B cell (primary cell): ENCODE measurements at regions of chr5 and their contacts with region 1.

Region 1: DNA sequence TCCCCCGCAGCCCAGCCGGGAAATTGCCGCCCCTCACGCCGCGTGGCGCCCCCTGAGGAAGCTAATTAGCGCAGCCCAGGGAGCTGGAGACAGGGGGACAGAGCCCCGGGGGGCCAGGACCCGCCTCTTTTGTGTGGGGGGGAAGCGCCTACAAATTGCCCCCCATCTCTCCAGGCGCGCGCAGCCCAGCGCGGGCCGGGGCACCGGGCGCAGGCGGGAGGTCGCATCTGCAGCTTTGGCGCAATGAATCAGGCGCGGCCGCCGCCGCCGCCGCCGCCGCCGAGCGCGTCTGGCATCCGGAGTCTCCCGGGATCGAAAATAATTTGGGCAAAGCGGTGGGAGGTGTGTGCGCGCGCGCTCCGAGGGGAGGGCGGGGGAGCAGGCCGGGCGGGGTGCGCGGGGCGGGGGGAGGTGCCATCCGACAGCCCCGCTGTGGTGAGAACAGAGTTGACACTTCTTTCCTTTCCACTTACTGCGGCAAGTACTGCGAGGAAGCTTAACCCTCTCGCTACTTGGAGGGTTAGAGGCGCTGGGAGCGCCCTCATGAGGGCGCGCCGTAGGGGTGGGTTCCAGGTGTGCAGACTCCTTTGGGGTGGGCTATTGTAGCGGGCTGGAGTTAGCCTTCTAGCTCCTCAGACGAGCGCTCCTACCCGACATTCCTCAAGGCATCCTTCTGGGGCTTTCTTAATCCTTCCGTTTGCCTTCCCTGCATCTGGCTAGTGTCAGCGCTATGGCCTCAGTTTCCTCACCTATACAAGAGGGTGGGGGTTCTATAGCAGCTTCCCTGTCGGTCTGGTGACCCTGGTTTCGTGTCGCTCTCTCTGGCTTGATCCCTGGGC is 63.1 kb downstream of the CXXC5 start:
- DNase-seq: peak; percentile 77
- ATAC-seq: peak; percentile 51
- H3K4me3 ChIP-seq: peak overlapping the region; percentile 54 to 73 (median 60)
- H3K4me3 Mint-ChIP-seq: peak overlapping the region; percentile 90
- H3K27ac ChIP-seq: peak overlapping the region in 1 of 2 donors; percentile 75
- H3K27ac Mint-ChIP-seq: peak overlapping the region; percentile 81
- H3K4me1 ChIP-seq: peaks cover 27 to 37% of the 10 kb centered on the region in 2 donors
- H3K4me1 Mint-ChIP-seq: peaks cover 40% of the 10 kb centered on the region
- H3K27me3 ChIP-seq: peaks cover 0 to 5% (median 2%) of the 10 kb centered on the region in 4 experiments
- H3K27me3 Mint-ChIP-seq: no peaks in the 10 kb centered on the region
- CTCF ChIP-seq: no peak

Region 2: GRCh38 chr5:139651853-139652787 is 59.2 kb before region 1 on chr5:
- CTCF ChIA-PET with region 1: interaction called, 4 read pairs
- POLR2A ChIA-PET with region 1: interaction called, 9 read pairs
- intact Hi-C with region 1: loop called (anchors 1 kb)
- DNase-seq: peak; percentile 92
- ATAC-seq: peak; percentile 50
- H3K4me3 ChIP-seq: peak overlapping the region; percentile 50 to 98 (median 95)
- H3K4me3 Mint-ChIP-seq: peak overlapping the region; percentile 88
- H3K27ac ChIP-seq: peak overlapping the region; percentile 71 to 90
- H3K27ac Mint-ChIP-seq: peak overlapping the region; percentile 94
- H3K4me1 ChIP-seq: peaks cover 68 to 74% of the 10 kb centered on the region in 2 donors
- H3K4me1 Mint-ChIP-seq: peaks cover 71% of the 10 kb centered on the region
- H3K27me3 ChIP-seq: no peaks in the 10 kb centered on the region
- H3K27me3 Mint-ChIP-seq: no peaks in the 10 kb centered on the region
- CTCF ChIP-seq: no peak

Region 3: DNA sequence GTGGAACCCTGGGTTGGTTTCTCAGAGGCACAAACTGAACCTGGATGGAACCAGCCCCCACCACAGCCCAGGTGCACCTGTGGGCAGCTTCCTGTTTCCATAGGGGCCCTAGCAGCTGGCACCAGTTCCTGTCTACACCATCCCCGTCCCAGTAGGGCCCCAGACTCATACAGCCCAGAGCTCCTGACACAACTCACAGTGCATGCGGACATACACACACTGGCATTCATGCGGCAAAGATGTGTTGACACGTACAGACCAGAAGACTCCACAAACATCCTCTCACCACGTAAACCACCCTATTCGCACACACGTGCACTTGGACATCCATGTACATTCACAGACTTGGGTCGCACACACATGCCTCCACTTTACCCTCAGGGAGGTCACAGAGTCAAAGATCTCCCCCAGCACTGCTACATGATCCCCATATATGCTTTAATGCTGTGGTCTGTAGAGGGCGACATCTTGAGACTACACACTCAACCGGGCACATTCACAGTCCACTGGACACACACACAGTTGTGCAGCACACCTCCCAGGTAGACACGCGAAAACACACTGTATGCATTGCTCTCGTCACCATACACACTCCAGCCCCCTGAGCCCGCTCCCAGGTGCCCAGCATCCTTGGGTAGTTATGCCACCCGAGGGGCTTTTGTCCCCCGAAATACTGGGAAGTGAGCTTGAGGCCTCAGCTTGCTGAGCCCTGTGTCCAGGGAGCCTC is 40.8 kb before region 1 on chr5:
- CTCF ChIA-PET with region 1: interaction called, 4 read pairs
- POLR2A ChIA-PET with region 1: interaction called, 15 read pairs
- intact Hi-C with region 1: loop called (anchors 2 kb)
- DNase-seq: peak; percentile 89
- ATAC-seq: peak; percentile 69
- H3K4me3 ChIP-seq: peak overlapping the region in 4 of 5 experiments; percentile 40 to 71 (median 52)
- H3K4me3 Mint-ChIP-seq: peak overlapping the region; percentile 86
- H3K27ac ChIP-seq: peak overlapping the region; percentile 89 to 90
- H3K27ac Mint-ChIP-seq: peak overlapping the region; percentile 95
- H3K4me1 ChIP-seq: peaks cover 88 to 98% of the 10 kb centered on the region in 2 donors
- H3K4me1 Mint-ChIP-seq: peaks cover 88% of the 10 kb centered on the region
- H3K27me3 ChIP-seq: no peaks in the 10 kb centered on the region
- H3K27me3 Mint-ChIP-seq: no peaks in the 10 kb centered on the region
- CTCF ChIP-seq: peak; percentile 47

Region 4: GRCh38 chr5:139696894-139697658 is 14.2 kb before region 1 on chr5:
- CTCF ChIA-PET with region 1: interaction called, 21 read pairs
- POLR2A ChIA-PET with region 1: interaction called, 7 read pairs
- intact Hi-C with region 1: loop called (anchors 1 kb)
- DNase-seq: peak; percentile 55
- ATAC-seq: peak; percentile 34
- H3K4me3 ChIP-seq: peak overlapping the region in 4 of 5 experiments; percentile 33 to 56 (median 45)
- H3K4me3 Mint-ChIP-seq: peak overlapping the region; percentile 82
- H3K27ac ChIP-seq: no peak overlapping the region
- H3K27ac Mint-ChIP-seq: peak overlapping the region; percentile 72
- H3K4me1 ChIP-seq: peaks cover 41 to 48% of the 10 kb centered on the region in 2 donors
- H3K4me1 Mint-ChIP-seq: peaks cover 45% of the 10 kb centered on the region
- H3K27me3 ChIP-seq: peaks cover 0 to 35% (median 10%) of the 10 kb centered on the region in 4 experiments
- H3K27me3 Mint-ChIP-seq: peaks cover 17% of the 10 kb centered on the region
- CTCF ChIP-seq: no peak

Region 5: DNA sequence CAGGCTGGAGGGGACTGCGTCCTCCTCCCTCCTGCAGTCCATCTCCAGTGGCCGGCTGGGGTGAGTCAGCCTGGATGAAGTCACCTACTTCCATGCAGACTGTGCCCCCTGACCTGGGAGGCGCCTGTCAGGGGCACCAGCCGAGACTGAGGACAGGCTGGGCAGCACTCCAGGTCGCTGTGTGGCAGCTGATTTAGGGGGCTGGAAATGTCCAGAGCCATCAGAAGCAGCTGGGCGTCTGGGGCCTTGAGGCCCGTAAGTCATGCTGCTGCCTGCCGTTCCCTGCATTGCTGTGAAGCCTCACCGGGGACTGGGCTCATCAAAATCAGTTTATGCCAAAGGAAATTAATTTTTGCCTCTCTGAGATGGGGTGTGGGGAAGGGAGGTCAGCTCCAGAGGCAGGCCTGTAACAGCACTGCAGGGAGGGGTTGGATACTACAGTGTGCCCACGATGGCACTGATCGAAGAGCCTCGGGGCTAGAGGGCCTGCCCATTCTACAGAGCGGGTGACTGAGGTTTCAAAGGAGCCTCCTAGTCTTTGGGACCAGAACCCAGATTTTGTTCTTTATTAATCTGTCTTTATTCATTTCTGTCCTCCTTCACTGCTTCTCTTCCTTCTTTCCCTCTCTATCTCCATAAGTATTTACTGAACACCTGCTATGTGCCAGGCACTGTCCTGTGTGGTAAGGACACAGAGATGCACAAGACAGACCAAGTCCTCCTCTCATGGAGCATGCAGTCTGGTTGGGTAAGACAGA is 14.0 kb after region 1 on chr5:
- CTCF ChIA-PET with region 1: interaction called, 5 read pairs
- POLR2A ChIA-PET with region 1: interaction called, 7 read pairs
- intact Hi-C with region 1: loop called (anchors 2 kb)
- DNase-seq: no peak
- ATAC-seq: no peak
- H3K4me3 ChIP-seq: no peak overlapping the region
- H3K4me3 Mint-ChIP-seq: no peak overlapping the region
- H3K27ac ChIP-seq: no peak overlapping the region
- H3K27ac Mint-ChIP-seq: no peak overlapping the region
- H3K4me1 ChIP-seq: peaks cover 6 to 29% of the 10 kb centered on the region in 2 donors
- H3K4me1 Mint-ChIP-seq: peaks cover 18% of the 10 kb centered on the region
- H3K27me3 ChIP-seq: no peaks in the 10 kb centered on the region
- H3K27me3 Mint-ChIP-seq: no peaks in the 10 kb centered on the region
- CTCF ChIP-seq: no peak